ENCODE measurements at regions of chr12 and their contacts with region 1.

Region 1: DNA sequence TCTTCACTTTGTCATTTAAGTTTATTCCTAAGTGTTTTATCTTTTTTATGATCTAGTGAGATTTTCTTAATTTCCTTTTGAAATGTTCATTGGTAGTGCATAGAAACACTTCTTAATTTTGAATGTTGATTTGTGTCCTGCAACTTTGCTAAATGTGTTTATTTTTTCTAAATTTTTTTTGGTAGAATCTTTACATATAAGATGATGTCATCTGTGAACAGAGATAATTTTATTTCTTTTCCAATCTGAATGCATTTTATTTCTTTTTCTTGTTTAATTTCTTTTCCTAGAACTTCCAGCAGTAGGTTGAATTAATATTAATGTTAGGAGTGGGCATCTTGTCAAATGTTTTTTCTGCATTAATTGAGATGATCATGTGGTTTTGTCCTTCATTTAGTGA is 42.1 kb downstream of the SLCO1B3 start:
- DNase-seq: no peak
- H3K4me3 ChIP-seq: no peak overlapping the region
- H3K27ac ChIP-seq: no peak overlapping the region
- H3K4me1 ChIP-seq: no peaks in the 10 kb centered on the region
- H3K27me3 ChIP-seq: no peaks in the 10 kb centered on the region
- CTCF ChIP-seq: no peak

Region 2: DNA sequence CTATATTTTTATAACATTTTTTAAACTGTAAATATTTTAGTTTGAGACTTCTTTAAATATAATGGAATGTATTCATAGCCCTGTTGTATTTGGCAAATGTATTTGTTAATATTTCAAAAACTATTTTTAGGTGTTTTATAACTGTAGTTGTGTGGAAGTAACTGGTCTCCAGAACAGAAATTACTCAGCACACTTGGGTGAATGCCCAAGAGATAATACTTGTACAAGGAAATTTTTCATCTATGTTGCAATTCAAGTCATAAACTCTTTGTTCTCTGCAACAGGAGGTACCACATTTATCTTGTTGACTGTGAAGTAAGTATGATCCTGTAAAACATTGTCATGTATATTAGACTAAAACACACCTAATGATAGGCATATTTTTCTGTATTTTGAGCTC is 30.6 kb after region 1 on chr12:
- CTCF ChIA-PET with region 1: no interaction called
- POLR2A ChIA-PET with region 1: no interaction called
- intact Hi-C with region 1: loop called (anchors 5 kb)
- DNase-seq: no peak
- H3K4me3 ChIP-seq: no peak overlapping the region
- H3K27ac ChIP-seq: no peak overlapping the region
- H3K4me1 ChIP-seq: no peaks in the 10 kb centered on the region
- H3K27me3 ChIP-seq: no peaks in the 10 kb centered on the region
- CTCF ChIP-seq: no peak